ENCODE measurements at regions of chr2 and their contacts with region 1.

Region 1: GRCh38 chr2:121412349-121412748 is 118.3 kb upstream of the RNU4ATAC start:
- DNase-seq: no peak
- H3K4me3 ChIP-seq: no peak overlapping the region
- H3K27ac ChIP-seq: no peak overlapping the region
- H3K4me1 ChIP-seq: no peaks in the 10 kb centered on the region
- H3K27me3 ChIP-seq: no peaks in the 10 kb centered on the region

Region 2: GRCh38 chr2:121400201-121400600 is 12.1 kb before region 1 on chr2:
- CTCF ChIA-PET with region 1: interaction called, 14 read pairs
- POLR2A ChIA-PET with region 1: no interaction called
- DNase-seq: no peak
- H3K4me3 ChIP-seq: no peak overlapping the region
- H3K27ac ChIP-seq: no peak overlapping the region
- H3K4me1 ChIP-seq: no peaks in the 10 kb centered on the region
- H3K27me3 ChIP-seq: no peaks in the 10 kb centered on the region

Measured in common myeloid progenitor, CD34-positive (primary cell).